ENCODE measurements at regions of chr10 and their contacts with region 1.

Region 1: GRCh38 chr10:95374597-95375209 is 83.9 kb upstream of the PDLIM1 start:
- DNase-seq: peak; percentile 59 to 65
- H3K4me3 ChIP-seq: no peak overlapping the region
- H3K27ac ChIP-seq: no peak overlapping the region
- H3K4me1 ChIP-seq: no peaks in the 10 kb centered on the region
- H3K27me3 ChIP-seq: no peaks in the 10 kb centered on the region
- CTCF ChIP-seq: peak; percentile 91

Region 2: DNA sequence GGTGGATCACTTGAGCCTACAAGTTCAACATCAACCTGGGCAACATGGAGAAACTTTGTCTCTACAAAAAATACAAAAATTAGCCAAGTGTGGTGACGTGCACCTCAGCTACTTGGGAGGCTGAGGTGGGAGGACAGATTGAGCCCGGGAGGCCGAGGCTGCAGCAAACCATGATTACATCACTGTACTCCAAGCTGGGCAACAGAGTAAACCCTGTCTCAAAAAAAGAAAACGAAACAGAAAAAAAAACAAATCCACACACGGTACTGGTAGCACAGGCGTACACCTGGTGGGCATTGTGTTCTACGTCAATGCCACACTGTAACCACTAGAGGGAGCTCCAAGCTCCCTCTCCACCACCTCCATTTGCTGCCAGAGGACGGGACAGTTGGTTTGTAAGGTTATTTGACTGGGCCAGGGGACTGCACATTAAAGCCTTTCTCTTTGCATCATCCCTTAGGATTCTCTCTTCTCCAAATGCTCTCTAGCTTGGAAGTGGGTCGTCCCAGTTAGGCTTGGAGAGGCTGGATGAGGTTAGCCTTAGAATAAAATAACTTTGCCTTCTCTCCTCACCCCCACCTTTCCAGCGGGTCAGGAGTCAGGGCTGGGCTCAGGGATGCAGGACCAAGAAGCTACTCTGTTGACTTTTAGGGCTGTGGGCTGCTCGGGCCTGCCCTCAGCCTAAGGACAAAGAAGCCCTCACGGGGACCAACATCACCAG is 55.7 kb after region 1 on chr10:
- CTCF ChIA-PET with region 1: interaction called, 4 read pairs
- POLR2A ChIA-PET with region 1: no interaction called
- intact Hi-C with region 1: loop called (anchors 1 kb)
- DNase-seq: peak; percentile 29 to 48
- H3K4me3 ChIP-seq: no peak overlapping the region
- H3K27ac ChIP-seq: peak overlapping the region; percentile 64
- H3K4me1 ChIP-seq: peaks cover 16% of the 10 kb centered on the region
- H3K27me3 ChIP-seq: no peaks in the 10 kb centered on the region
- CTCF ChIP-seq: peak; percentile 83

Region 3: DNA sequence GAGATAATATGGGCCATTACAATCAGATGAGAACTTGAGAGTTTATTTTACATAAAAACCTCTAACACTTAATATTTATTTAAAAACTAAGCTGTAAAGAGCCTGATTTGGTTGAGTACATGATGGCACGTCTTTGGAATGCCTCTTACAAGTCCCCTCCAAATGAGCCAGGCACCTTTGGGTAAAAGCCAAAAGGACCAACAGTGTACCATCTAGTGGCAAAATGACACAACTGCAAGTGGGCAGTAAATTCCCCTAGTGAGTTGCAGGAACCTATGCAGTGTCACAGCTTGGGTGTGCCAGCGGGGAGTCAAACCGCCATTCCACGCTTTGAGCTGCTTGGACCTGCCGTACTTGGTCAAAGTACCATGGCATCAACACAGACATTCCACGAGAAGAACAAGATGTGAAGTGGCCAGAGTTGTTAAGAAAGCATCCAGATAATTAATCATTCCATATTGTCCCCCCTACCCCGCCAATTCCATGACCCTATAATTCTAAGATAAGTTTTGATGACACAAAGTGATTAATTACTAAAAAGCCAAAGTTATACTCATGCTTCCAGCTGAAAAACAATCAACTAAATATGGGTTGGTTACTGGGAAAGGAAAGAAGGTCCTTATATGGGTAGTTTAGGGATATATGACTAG is 71.3 kb after region 1 on chr10:
- CTCF ChIA-PET with region 1: interaction called, 4 read pairs
- POLR2A ChIA-PET with region 1: no interaction called
- intact Hi-C with region 1: loop called (anchors 2 kb)
- DNase-seq: peak; percentile 38 to 64
- H3K4me3 ChIP-seq: no peak overlapping the region
- H3K27ac ChIP-seq: no peak overlapping the region
- H3K4me1 ChIP-seq: peaks cover 8% of the 10 kb centered on the region; the same call in 1 of the 2 replicates
- H3K27me3 ChIP-seq: no peaks in the 10 kb centered on the region
- CTCF ChIP-seq: peak; percentile 79

Region 4: GRCh38 chr10:95509251-95509650 is 134.5 kb after region 1 on chr10:
- CTCF ChIA-PET with region 1: interaction called, 10 read pairs
- POLR2A ChIA-PET with region 1: no interaction called
- intact Hi-C with region 1: no loop called
- DNase-seq: no peak
- H3K4me3 ChIP-seq: no peak overlapping the region
- H3K27ac ChIP-seq: no peak overlapping the region
- H3K4me1 ChIP-seq: no peaks in the 10 kb centered on the region
- H3K27me3 ChIP-seq: no peaks in the 10 kb centered on the region
- CTCF ChIP-seq: no peak

Region 5: DNA sequence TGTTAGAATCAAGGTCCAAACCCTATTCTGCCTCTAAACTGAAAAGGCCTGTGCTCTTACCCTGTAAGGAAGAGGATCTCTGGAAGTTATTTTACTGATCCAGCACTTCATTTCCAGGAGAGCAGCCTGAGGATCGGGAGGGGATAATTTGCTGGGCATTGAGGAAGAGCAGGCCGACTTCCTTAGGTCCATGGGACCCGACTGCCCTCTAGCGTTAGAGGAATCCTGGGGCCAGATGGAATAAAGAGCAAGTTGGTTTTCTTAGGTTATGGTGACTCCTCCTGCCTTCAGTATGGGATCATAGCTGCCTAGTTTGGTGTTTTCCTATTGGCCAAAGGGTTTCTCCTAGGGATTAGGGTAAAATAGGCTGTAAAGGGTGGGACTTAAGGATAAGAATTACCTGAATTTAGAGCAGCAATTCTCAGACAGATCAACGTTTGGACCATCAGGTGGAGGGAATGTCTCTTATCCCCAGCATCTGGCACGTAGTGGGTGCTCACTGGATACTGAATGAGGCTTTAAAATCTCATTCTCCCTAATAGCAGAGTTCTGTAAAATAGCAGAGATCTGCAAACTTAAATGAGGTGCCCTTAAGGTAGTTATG is 226.5 kb after region 1 on chr10:
- CTCF ChIA-PET with region 1: interaction called, 17 read pairs
- POLR2A ChIA-PET with region 1: no interaction called
- intact Hi-C with region 1: loop called (anchors 1 kb)
- DNase-seq: peak; percentile 56 to 62
- H3K4me3 ChIP-seq: no peak overlapping the region
- H3K27ac ChIP-seq: no peak overlapping the region
- H3K4me1 ChIP-seq: no peaks in the 10 kb centered on the region
- H3K27me3 ChIP-seq: no peaks in the 10 kb centered on the region
- CTCF ChIP-seq: peak; percentile 83

Region 6: GRCh38 chr10:95864906-95865813 is 490.5 kb after region 1 on chr10:
- CTCF ChIA-PET with region 1: no interaction called
- POLR2A ChIA-PET with region 1: no interaction called
- intact Hi-C with region 1: loop called (anchors 10 kb)
- DNase-seq: peak in 1 of 2 experiments; percentile 7
- H3K4me3 ChIP-seq: no peak overlapping the region
- H3K27ac ChIP-seq: no peak overlapping the region
- H3K4me1 ChIP-seq: no peaks in the 10 kb centered on the region
- H3K27me3 ChIP-seq: no peaks in the 10 kb centered on the region
- CTCF ChIP-seq: peak; percentile 58